GM12878 (cell line): ENCODE measurements at regions of chr6 and their contacts with region 1.

Region 1: DNA sequence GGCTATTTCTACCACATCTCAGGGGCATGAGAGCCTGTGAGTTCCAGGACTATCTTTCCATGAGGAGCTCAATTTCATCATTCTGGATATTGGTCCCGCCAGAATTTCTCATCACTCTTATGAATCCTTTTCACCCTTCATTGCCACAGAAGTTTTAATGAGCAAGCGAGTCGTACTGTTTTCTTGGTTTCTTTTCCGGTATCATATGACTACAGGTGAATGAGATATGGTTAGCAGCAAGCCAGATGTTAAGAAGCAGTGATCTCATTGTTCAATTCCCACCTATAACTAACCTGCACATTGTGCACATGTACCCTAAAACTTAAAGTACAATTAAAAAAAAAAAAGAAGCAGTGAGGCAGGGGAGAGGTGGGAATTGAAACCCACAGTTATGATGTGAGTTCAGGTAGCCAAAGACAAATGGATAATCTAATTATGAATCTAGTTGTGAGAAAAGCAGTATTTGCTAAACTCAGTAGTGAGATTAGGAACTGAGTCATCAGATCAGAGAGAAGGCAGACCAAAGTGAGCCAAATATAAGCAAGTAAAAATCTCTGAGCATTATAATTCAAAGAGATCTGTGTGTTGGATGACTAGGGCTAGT is 78.0 kb upstream of the ELOVL5 start:
- DNase-seq: peak; percentile 74
- ATAC-seq: peak; percentile 90
- H3K4me3 ChIP-seq: no peak overlapping the region
- H3K27ac ChIP-seq: no peak overlapping the region
- H3K4me1 ChIP-seq: peaks cover 4% of the 10 kb centered on the region; the same call in 1 of the 2 replicates
- H3K27me3 ChIP-seq: 0 out of 4 replicates have a peak, but pooled peaks cover 0 to 7% of the 10 kb centered on the region in 2 experiments
- CTCF ChIP-seq: no peak
- EP300 ChIP-seq: peak; percentile 65 to 90; a peak in 3 of 4 replicates
- POLR2A ChIP-seq: no peak
- RAD21 ChIP-seq: no peak

Region 2: GRCh38 chr6:53244958-53245357 is 181.8 kb before region 1 on chr6:
- CTCF ChIA-PET with region 1: no interaction called
- POLR2A ChIA-PET with region 1: no interaction called
- RAD21 ChIA-PET with region 1: interaction called, 4 read pairs
- SMC1A ChIA-PET with region 1: interaction called, 4 read pairs
- in situ Hi-C with region 1: no loop called
- intact Hi-C with region 1: loop called (anchors 2 kb)
- DNase-seq: peak; percentile 72
- ATAC-seq: peak; percentile 87
- H3K4me3 ChIP-seq: no peak overlapping the region
- H3K27ac ChIP-seq: no peak overlapping the region
- H3K4me1 ChIP-seq: peaks cover 35% of the 10 kb centered on the region
- H3K27me3 ChIP-seq: no peaks in the 10 kb centered on the region
- CTCF ChIP-seq: no peak
- EP300 ChIP-seq: peak in 1 of 2 experiments; percentile 51; a peak in 1 of 4 replicates
- POLR2A ChIP-seq: no peak
- RAD21 ChIP-seq: no peak

Region 3: GRCh38 chr6:53309059-53309900 is 117.5 kb before region 1 on chr6:
- CTCF ChIA-PET with region 1: no interaction called
- POLR2A ChIA-PET with region 1: interaction called, 4 read pairs
- RAD21 ChIA-PET with region 1: interaction called, 9 read pairs
- SMC1A ChIA-PET with region 1: interaction called, 27 read pairs
- in situ Hi-C with region 1: no loop called
- intact Hi-C with region 1: no loop called
- DNase-seq: peak; percentile 42
- ATAC-seq: peak; percentile 58
- H3K4me3 ChIP-seq: no peak overlapping the region
- H3K27ac ChIP-seq: peak overlapping the region; percentile 10
- H3K4me1 ChIP-seq: peaks cover 39% of the 10 kb centered on the region
- H3K27me3 ChIP-seq: no peaks in the 10 kb centered on the region
- CTCF ChIP-seq: no peak
- EP300 ChIP-seq: peak in 1 of 2 experiments; percentile 19; a peak in 1 of 4 replicates
- POLR2A ChIP-seq: peak; percentile 28; the same call in 1 of the 2 replicates
- RAD21 ChIP-seq: no peak

Region 4: GRCh38 chr6:53342217-53342616 is 84.6 kb before region 1 on chr6:
- CTCF ChIA-PET with region 1: interaction called, 5 read pairs
- POLR2A ChIA-PET with region 1: interaction called, 20 read pairs
- RAD21 ChIA-PET with region 1: interaction called, 16 read pairs
- SMC1A ChIA-PET with region 1: interaction called, 22 read pairs
- in situ Hi-C with region 1: no loop called
- intact Hi-C with region 1: no loop called
- DNase-seq: no peak
- ATAC-seq: peak; percentile 28
- H3K4me3 ChIP-seq: peak overlapping the region; percentile 5; the same call in 1 of the 2 replicates
- H3K27ac ChIP-seq: no peak overlapping the region
- H3K4me1 ChIP-seq: peaks cover 23% of the 10 kb centered on the region
- H3K27me3 ChIP-seq: no peaks in the 10 kb centered on the region
- CTCF ChIP-seq: no peak
- EP300 ChIP-seq: no peak
- POLR2A ChIP-seq: no peak
- RAD21 ChIP-seq: no peak

Region 5: DNA sequence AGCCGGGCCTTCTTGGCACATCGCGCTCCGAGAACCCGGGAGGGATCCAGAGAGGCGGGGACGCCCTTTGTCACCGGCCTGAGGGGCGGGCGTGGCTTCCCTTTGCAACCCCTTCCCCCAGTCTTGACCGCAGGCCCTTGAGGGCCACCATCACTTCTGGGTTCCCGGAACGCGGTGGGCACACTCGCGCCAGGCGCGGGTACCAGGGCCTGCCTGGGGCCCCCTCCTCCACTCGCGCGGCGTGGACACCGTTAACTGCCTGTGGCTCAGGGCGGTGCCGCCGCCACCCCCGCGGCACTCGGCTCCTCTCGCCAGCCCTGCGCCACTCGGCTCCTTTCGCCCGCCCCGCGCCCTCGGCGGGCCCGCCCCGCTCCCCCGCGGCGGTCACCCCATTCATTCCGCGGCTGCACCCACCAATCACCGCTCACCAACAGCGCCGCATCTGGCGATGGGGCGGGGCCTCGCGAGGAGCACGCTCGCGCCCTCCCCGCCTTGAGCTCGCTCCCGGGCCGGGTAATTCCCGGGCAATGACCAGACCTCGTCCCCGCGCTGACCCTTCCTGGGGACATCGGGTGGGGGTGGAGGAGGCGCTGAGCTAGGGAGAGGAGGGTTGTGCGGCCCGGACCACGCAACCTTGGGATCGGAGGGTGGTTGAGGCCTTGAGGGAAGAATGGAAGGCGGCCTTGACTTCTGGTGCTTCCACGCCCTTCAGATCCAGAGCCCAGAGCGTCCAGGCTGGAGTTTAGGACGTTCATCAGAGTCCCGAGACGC is 67.5 kb before region 1 on chr6:
- CTCF ChIA-PET with region 1: interaction called, 3 read pairs
- POLR2A ChIA-PET with region 1: interaction called, 31 read pairs
- RAD21 ChIA-PET with region 1: interaction called, 14 read pairs
- SMC1A ChIA-PET with region 1: interaction called, 6 read pairs
- in situ Hi-C with region 1: no loop called
- intact Hi-C with region 1: loop called (anchors 2 kb)
- DNase-seq: peak; percentile 78
- ATAC-seq: peak; percentile 95
- H3K4me3 ChIP-seq: peak overlapping the region; percentile 76
- H3K27ac ChIP-seq: peak overlapping the region; percentile 86
- H3K4me1 ChIP-seq: peaks cover 17% of the 10 kb centered on the region
- H3K27me3 ChIP-seq: no peaks in the 10 kb centered on the region
- CTCF ChIP-seq: no peak
- EP300 ChIP-seq: 0 out of 4 replicates have a peak, but pooled peaks of 1 of the 2 experiments have one; percentile 8
- POLR2A ChIP-seq: peak; percentile 94
- RAD21 ChIP-seq: no peak

Region 6: GRCh38 chr6:53461041-53461656 is 34.4 kb after region 1 on chr6:
- CTCF ChIA-PET with region 1: interaction called, 8 read pairs
- POLR2A ChIA-PET with region 1: interaction called, 7 read pairs
- RAD21 ChIA-PET with region 1: interaction called, 19 read pairs
- SMC1A ChIA-PET with region 1: interaction called, 229 read pairs
- in situ Hi-C with region 1: no loop called
- intact Hi-C with region 1: loop called (anchors 5 kb)
- DNase-seq: peak; percentile 65
- ATAC-seq: peak; percentile 81
- H3K4me3 ChIP-seq: 0 out of 2 replicates have a peak overlapping the region, but pooled peaks have one; percentile 30
- H3K27ac ChIP-seq: peak overlapping the region; percentile 41; the same call in 1 of the 2 replicates
- H3K4me1 ChIP-seq: no peaks in the 10 kb centered on the region
- H3K27me3 ChIP-seq: no peaks in the 10 kb centered on the region
- CTCF ChIP-seq: no peak
- EP300 ChIP-seq: peak; percentile 40 to 60; a peak in 2 of 4 replicates
- POLR2A ChIP-seq: no peak
- RAD21 ChIP-seq: no peak